A673 (cell line): ENCODE measurements at regions of chr19 and their contacts with region 1.

Region 1: DNA sequence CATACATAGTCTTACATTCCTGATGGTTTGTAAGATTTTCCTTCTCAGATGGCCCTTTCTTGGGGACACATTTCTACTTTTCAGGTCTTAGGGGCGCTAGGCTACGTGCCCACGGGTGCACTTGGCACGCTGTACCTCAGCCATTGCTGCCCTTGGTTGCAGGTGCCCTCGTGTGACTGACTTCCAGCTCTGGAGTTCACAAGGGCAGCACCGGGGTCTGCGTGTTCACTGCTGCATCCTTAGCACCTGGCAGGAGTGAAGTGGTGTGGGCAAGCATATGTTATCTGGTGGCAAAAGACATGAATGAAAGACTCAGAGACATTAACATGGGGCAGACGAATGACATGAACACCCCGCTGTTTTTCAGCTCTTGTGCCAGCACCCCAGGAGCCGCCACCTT is 13.3 kb upstream of the WDR88 start:
- DNase-seq: no peak
- H3K4me3 ChIP-seq: no peak overlapping the region
- H3K27ac ChIP-seq: no peak overlapping the region
- H3K4me1 ChIP-seq: no peaks in the 10 kb centered on the region
- H3K27me3 ChIP-seq: no peaks in the 10 kb centered on the region
- CTCF ChIP-seq: no peak

Region 2: GRCh38 chr19:32924203-32924930 is 194.3 kb before region 1 on chr19:
- CTCF ChIA-PET with region 1: interaction called, 10 read pairs
- POLR2A ChIA-PET with region 1: no interaction called
- intact Hi-C with region 1: no loop called
- DNase-seq: no peak
- H3K4me3 ChIP-seq: no peak overlapping the region
- H3K27ac ChIP-seq: no peak overlapping the region
- H3K4me1 ChIP-seq: no peaks in the 10 kb centered on the region
- H3K27me3 ChIP-seq: no peaks in the 10 kb centered on the region
- CTCF ChIP-seq: no peak

Region 3: GRCh38 chr19:32971715-32972540 is 146.7 kb before region 1 on chr19 and contains the starts of genes CEP89 and FAAP24:
- CTCF ChIA-PET with region 1: interaction called, 3 read pairs
- POLR2A ChIA-PET with region 1: no interaction called
- intact Hi-C with region 1: loop called (anchors 1 kb)
- DNase-seq: peak; percentile 99
- H3K4me3 ChIP-seq: peak within 1 kb of the TSS; percentile 72
- H3K27ac ChIP-seq: peak within 1 kb of the TSS; percentile 63
- H3K4me1 ChIP-seq: peaks cover 7% of the 10 kb centered on the region
- H3K27me3 ChIP-seq: no peaks in the 10 kb centered on the region
- CTCF ChIP-seq: no peak
- total RNA-seq, gene CEP89: 38.7 and 47.2 TPM in 2 replicates
- total RNA-seq, gene FAAP24: 10.0 and 11.1 TPM in 2 replicates